Natural killer cell (primary cell): ENCODE measurements at regions of chr1 and their contacts with region 1.

Region 1: DNA sequence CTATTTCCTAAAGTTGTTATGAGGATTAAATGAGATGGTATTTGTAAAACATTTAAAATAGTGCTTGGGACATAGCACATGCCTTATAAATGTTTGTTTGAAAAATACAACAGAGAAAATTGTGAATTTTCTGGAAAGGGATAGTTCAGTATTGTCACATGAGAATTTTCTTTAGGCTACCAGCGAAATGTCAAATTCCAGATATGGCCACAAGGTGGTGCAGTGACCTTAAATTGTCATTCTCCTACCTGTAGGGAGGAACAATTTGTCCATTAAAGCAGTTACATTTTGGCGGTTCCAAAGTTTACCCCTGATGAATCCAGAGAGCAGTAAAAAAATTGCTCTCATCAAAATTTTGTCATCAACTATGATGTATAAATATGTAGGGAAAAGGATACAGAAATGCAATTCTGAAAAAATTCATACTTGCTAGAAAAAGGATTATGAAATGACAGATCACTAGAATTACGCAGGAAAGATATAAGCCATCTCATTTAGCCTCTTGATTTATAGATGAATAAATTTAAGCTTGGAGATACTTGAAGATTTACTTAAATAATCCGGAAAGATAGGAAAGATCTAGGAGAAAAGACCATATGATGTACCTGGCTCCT is 50.2 kb upstream of the TSHB start:
- DNase-seq: peak; percentile 47 to 85
- ATAC-seq: peak; percentile 49 to 63 (median 57)
- H3K4me3 ChIP-seq: no peak overlapping the region
- H3K4me3 Mint-ChIP-seq: no peak overlapping the region
- H3K27ac ChIP-seq: no peak overlapping the region
- H3K27ac Mint-ChIP-seq: no peak overlapping the region
- H3K4me1 ChIP-seq: no peaks in the 10 kb centered on the region
- H3K4me1 Mint-ChIP-seq: no peaks in the 10 kb centered on the region
- H3K27me3 ChIP-seq: peaks cover 14% of the 10 kb centered on the region
- H3K27me3 Mint-ChIP-seq: peaks cover 26 to 31% of the 10 kb centered on the region in 2 donors
- CTCF ChIP-seq: peak; percentile 92

Region 2: GRCh38 chr1:114854693-114855320 is 124.6 kb before region 1 on chr1 and contains the start of gene SYCP1:
- intact Hi-C with region 1: no loop called
- DNase-seq: no peak
- ATAC-seq: no peak
- H3K4me3 ChIP-seq: no peak within 1 kb of the TSS
- H3K4me3 Mint-ChIP-seq: peak within 1 kb of the TSS; percentile 63
- H3K27ac ChIP-seq: no peak within 1 kb of the TSS
- H3K27ac Mint-ChIP-seq: no peak within 1 kb of the TSS
- H3K4me1 ChIP-seq: peaks cover 7% of the 10 kb centered on the region
- H3K4me1 Mint-ChIP-seq: peaks cover 10 to 11% of the 10 kb centered on the region in 2 donors
- H3K27me3 ChIP-seq: peaks cover 34% of the 10 kb centered on the region
- H3K27me3 Mint-ChIP-seq: peaks cover 18 to 27% of the 10 kb centered on the region in 2 donors
- CTCF ChIP-seq: no peak
- total RNA-seq, gene SYCP1: not detected

Region 3: DNA sequence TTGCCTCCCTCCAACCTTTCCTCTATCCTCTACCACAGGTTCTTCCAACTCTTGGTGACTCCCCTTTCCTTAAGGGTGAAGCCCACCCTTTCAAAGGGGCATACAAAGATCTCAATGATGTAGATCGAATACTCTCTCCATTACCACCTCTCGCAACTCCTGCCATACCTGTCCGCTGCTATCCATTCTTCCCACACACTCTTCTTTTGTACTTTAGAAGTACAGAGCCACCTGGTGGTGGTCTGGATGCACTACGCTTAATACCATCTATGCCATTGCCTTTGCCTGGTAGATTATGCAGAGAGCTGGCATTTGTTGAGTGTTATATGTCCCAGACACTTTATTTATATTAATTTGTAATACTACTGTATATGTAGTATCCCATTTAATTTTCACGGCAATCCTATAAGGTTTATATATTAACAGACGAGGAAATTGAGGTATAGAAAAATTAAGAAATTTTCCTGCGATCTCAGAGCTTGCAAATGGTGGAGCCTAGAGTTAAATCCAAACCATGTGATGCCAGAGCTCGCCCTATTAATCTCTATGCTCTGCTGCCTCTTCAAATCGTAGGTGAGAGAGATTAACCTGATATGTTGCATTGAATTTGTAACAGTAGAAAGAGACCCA is 73.2 kb after region 1 on chr1:
- intact Hi-C with region 1: loop called (anchors 1 kb)
- DNase-seq: peak in 1 of 2 donors; percentile 80
- ATAC-seq: peak; percentile 76 to 93 (median 84)
- H3K4me3 ChIP-seq: no peak overlapping the region
- H3K4me3 Mint-ChIP-seq: no peak overlapping the region
- H3K27ac ChIP-seq: no peak overlapping the region
- H3K27ac Mint-ChIP-seq: no peak overlapping the region
- H3K4me1 ChIP-seq: no peaks in the 10 kb centered on the region
- H3K4me1 Mint-ChIP-seq: no peaks in the 10 kb centered on the region
- H3K27me3 ChIP-seq: no peaks in the 10 kb centered on the region
- H3K27me3 Mint-ChIP-seq: no peaks in the 10 kb centered on the region
- CTCF ChIP-seq: peak; percentile 97

Region 4: GRCh38 chr1:115112496-115113375 is 133.4 kb after region 1 on chr1:
- intact Hi-C with region 1: loop called (anchors 1 kb)
- DNase-seq: peak; percentile 57 to 71
- ATAC-seq: peak; percentile 59 to 66 (median 62)
- H3K4me3 ChIP-seq: no peak overlapping the region
- H3K4me3 Mint-ChIP-seq: no peak overlapping the region
- H3K27ac ChIP-seq: no peak overlapping the region
- H3K27ac Mint-ChIP-seq: no peak overlapping the region
- H3K4me1 ChIP-seq: peaks cover 10% of the 10 kb centered on the region
- H3K4me1 Mint-ChIP-seq: peaks cover 7 to 11% of the 10 kb centered on the region in 2 donors
- H3K27me3 ChIP-seq: no peaks in the 10 kb centered on the region
- H3K27me3 Mint-ChIP-seq: peaks cover 2% of the 10 kb centered on the region in 2 donors
- CTCF ChIP-seq: peak; percentile 98